Activated CD4-positive, alpha-beta T cell treated with anti-CD3 and anti-CD28 coated beads, Interleukin-2, amount 10 ng/mL, durations not matched to agents 24 days and 14 days (primary cell): ENCODE measurements at regions of chr3 and their contacts with region 1.

Region 1: DNA sequence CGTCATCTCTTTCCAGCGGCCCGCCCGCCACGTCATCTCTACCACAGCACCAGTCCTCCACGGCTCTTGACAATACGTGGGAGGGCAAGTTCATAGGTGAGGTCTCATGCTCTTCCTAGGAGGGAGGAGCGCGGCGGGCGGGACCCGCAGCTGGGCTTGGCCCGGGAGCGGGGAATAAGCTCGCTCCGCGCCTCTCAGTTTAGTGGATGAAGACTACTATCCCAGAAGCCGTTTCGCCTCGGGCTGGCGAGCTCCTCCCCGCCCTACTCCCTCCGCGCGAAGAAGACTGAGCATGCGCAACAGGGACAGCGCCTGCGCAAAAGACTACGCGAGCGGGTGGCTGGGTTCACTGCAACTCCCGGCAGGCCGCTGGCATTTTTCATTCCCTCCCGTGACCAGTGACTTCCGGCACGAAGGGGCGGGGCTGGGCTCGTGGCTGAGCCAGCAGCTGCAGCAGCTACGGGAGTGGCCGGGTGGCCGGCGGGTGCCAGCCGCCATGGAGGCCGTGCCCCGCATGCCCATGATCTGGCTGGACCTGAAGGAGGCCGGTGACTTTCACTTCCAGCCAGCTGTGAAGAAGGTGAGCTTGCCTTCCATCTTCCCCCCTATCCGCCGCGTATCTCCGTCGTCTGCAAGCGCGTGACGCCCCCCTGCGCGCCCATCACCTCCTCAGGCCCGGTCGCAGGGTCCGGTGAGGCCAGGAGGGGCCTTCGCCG is at the start of gene PTPN23:
- DNase-seq: peak; percentile 100
- H3K4me3 Mint-ChIP-seq: peak within 1 kb of the TSS; percentile 95
- H3K27ac Mint-ChIP-seq: peak within 1 kb of the TSS; percentile 100
- H3K4me1 Mint-ChIP-seq: peaks cover 35% of the 10 kb centered on the region
- H3K27me3 Mint-ChIP-seq: peaks cover 2% of the 10 kb centered on the region
- total RNA-seq, gene PTPN23: 34.1 and 34.6 TPM in 2 replicates

Region 2: DNA sequence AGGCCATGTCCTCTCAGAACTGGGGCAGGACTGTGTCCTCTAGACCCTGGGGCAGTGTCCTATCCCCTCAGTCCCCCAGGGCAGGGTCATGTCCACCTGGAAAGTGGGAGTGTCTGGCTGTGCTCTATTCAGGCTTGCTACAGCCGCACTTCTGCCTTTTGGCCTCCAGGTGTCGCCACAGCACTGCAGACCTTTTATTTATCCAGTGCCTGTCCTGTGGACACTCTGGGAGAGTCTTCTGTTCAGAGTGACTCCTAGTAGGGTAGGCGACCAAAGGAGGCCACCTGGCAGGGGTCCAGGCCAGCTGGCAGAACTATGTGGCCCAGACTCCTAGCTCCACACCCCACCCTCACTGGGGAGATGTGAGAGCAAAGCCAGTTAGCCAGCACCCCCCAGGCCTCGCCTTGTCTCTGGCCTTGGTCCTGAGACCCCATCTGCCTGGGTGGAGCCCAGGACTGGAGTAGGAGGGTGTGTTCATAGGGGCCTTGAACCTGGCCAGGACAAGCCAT is 675.7 kb before region 1 on chr3:
- intact Hi-C with region 1: loop called (anchors 10 kb)
- DNase-seq: peak; percentile 90
- H3K4me3 Mint-ChIP-seq: no peak overlapping the region
- H3K27ac Mint-ChIP-seq: no peak overlapping the region
- H3K4me1 Mint-ChIP-seq: peaks cover 1% of the 10 kb centered on the region
- H3K27me3 Mint-ChIP-seq: peaks cover 28% of the 10 kb centered on the region

Region 3: DNA sequence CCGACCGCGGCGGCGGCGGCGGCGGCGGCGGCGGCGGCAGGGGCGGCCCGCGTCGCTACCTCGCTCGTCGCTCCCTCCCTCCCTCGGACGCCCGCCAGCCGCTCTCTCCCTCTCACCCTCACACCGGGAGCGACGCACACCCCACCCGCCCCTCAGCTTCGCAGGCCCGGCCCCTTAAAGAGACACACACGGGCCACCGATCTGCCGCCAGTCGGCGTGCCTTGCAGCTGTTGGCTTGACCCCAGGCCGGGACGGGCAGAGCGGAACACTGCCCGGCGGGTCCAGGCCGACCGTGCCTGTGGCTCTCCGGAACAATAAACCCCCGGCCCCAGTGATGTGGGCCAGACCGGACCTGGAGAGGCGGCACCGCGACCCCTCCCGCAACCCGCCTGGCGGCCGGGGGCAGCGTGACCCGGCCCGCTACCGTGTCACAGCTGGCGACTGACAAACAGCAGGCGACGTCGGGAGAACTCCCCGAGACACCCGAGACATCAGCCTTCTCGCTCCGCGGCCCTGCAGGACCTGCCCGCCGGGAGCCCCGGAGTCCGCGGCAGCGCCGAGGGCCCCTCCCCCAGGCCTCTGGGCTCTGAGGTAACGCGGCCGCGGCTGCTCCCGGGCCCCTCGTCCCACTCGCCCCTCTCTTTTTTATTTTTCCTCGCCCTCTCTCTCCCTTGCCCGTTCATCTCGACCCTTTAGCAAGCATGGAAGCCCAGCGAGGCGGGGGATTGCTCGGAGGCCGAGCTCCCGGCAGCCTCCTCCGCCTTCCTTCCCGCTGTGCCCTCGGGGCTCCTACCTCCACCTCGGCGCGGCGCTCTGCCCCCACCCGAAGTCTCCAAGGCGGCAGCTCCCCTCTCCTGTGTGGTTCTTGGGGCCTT is 216.5 kb before region 1 on chr3 and contains the start of gene SETD2:
- intact Hi-C with region 1: loop called (anchors 2 kb)
- DNase-seq: peak; percentile 94
- H3K4me3 Mint-ChIP-seq: peak within 1 kb of the TSS; percentile 94
- H3K27ac Mint-ChIP-seq: peak within 1 kb of the TSS; percentile 98
- H3K4me1 Mint-ChIP-seq: peaks cover 46% of the 10 kb centered on the region
- H3K27me3 Mint-ChIP-seq: no peaks in the 10 kb centered on the region
- total RNA-seq, gene SETD2: 41.5 and 42.0 TPM in 2 replicates

Region 4: GRCh38 chr3:47362701-47363100 is 18.1 kb before region 1 on chr3:
- intact Hi-C with region 1: loop called (anchors 1 kb)
- DNase-seq: no peak
- H3K4me3 Mint-ChIP-seq: no peak overlapping the region
- H3K27ac Mint-ChIP-seq: no peak overlapping the region
- H3K4me1 Mint-ChIP-seq: peaks cover 10% of the 10 kb centered on the region
- H3K27me3 Mint-ChIP-seq: no peaks in the 10 kb centered on the region

Region 5: DNA sequence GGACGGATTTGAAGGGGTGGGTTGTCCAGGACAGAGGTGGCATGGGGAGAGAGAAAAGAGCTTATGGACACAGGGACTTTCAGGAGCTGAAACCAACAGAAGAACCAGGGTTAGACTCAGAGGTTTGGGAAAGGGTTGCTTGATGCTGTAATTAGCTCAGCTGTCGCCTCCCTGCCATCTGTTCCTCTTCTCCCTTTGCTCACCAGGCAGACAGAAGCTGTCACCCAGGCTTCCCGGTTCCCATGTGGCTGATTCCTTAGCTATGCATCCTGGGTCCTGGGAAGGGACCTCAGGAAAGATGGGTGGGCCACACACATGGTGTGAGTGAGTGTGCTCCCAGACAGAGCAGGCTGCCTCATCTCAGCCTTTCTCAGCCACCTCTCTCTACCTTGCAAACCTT is 14.1 kb after region 1 on chr3:
- intact Hi-C with region 1: no loop called
- DNase-seq: no peak
- H3K4me3 Mint-ChIP-seq: no peak overlapping the region
- H3K27ac Mint-ChIP-seq: no peak overlapping the region
- H3K4me1 Mint-ChIP-seq: peaks cover 24% of the 10 kb centered on the region
- H3K27me3 Mint-ChIP-seq: no peaks in the 10 kb centered on the region

Region 6: GRCh38 chr3:47420511-47421484 is 40.0 kb after region 1 on chr3:
- intact Hi-C with region 1: no loop called
- DNase-seq: peak; percentile 97
- H3K4me3 Mint-ChIP-seq: peak overlapping the region; percentile 71
- H3K27ac Mint-ChIP-seq: peak overlapping the region; percentile 99
- H3K4me1 Mint-ChIP-seq: peaks cover 13% of the 10 kb centered on the region
- H3K27me3 Mint-ChIP-seq: no peaks in the 10 kb centered on the region

Region 7: GRCh38 chr3:47578119-47578632 is 197.4 kb after region 1 on chr3:
- intact Hi-C with region 1: no loop called
- DNase-seq: peak; percentile 87
- H3K4me3 Mint-ChIP-seq: peak overlapping the region; percentile 73
- H3K27ac Mint-ChIP-seq: no peak overlapping the region
- H3K4me1 Mint-ChIP-seq: no peaks in the 10 kb centered on the region
- H3K27me3 Mint-ChIP-seq: peaks cover 34% of the 10 kb centered on the region

Region 8: DNA sequence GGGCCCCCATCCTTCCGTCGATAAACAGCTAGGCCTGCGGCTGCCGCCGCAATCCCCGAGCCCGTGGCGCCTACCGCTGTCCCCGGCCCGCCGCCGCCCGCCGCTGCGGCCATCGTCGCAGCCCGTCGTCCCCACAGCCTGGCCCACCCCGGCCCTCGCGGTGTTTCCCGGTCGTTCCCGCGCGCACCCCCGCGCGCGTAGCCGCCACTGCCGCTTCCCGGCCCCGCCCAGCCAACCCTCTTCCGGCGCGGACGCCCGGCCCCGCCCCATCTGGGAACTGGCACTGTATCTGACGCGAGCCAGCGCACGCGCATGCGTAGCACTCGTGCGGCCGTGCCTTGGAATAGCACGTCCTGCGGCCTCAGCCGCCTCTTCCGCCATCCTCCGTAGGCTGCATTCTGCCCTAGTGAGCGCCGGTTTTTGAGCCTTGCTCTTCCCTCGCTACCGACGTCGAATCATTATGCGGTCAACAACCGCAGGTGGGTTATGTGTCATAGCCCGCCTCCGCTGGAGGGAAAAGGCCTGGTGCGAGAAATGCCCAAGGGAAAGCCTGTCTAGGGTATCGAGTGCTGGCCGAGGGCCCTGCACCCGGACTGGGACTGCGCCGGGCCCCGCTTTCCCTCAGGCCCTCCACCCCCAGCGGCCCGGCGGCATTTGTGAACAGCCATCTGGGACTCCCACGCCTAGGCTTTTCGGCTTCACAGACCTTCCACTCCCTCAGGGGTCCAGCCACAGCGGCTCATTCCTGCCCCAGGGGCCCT is 401.1 kb after region 1 on chr3 and contains the start of gene SMARCC1:
- intact Hi-C with region 1: loop called (anchors 2 kb)
- DNase-seq: peak; percentile 100
- H3K4me3 Mint-ChIP-seq: peak within 1 kb of the TSS; percentile 96
- H3K27ac Mint-ChIP-seq: peak within 1 kb of the TSS; percentile 100
- H3K4me1 Mint-ChIP-seq: peaks cover 22% of the 10 kb centered on the region
- H3K27me3 Mint-ChIP-seq: peaks cover 1% of the 10 kb centered on the region
- total RNA-seq, gene SMARCC1: 148 and 156 TPM in 2 replicates